H1 (cell line): ENCODE measurements at regions of chr19 and their contacts with region 1.

Region 1: GRCh38 chr19:12716861-12717260 is 6.9 kb downstream of the TNPO2 start:
- DNase-seq: no peak
- H3K4me3 ChIP-seq: no peak overlapping the region
- H3K27ac ChIP-seq: no peak overlapping the region
- H3K4me1 ChIP-seq: peaks cover 0 to 6% (median 2%) of the 10 kb centered on the region in 4 experiments; a peak in 4 of 7 replicates
- H3K27me3 ChIP-seq: no peaks in the 10 kb centered on the region
- CTCF ChIP-seq: peak; percentile 19 to 65 (median 41); a peak in 3 of 4 replicates
- EP300 ChIP-seq: no peak
- POLR2A ChIP-seq: no peak
- RAD21 ChIP-seq: peak; percentile 60 to 68

Region 2: GRCh38 chr19:12603714-12604113 is 113.1 kb before region 1 on chr19:
- CTCF ChIA-PET with region 1: no interaction called
- POLR2A ChIA-PET with region 1: no interaction called
- DNase-seq: no peak
- H3K4me3 ChIP-seq: no peak overlapping the region
- H3K27ac ChIP-seq: no peak overlapping the region
- H3K4me1 ChIP-seq: no peaks in the 10 kb centered on the region
- H3K27me3 ChIP-seq: no peaks in the 10 kb centered on the region
- CTCF ChIP-seq: no peak
- EP300 ChIP-seq: no peak
- POLR2A ChIP-seq: no peak
- RAD21 ChIP-seq: no peak

Region 3: DNA sequence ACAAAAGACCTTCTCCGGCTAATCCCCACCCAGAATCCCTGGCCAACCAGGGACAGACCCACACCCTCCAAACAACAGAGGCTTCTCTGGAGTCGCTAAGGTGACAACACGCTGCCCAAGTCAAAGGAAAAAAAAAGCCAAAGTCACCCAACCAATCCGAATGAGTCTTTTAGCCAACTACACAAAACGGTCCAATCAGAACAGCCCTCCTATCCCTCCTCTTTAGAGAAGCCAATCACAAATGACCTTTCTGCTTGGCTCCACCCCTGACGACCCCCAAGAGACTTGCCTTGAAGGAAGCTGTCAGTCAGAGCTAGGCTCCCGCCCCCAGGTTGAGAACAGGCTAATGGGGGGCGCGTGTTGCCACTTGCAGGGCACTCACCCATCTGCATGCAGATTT is 13.8 kb before region 1 on chr19:
- CTCF ChIA-PET with region 1: interaction called, 6 read pairs
- POLR2A ChIA-PET with region 1: interaction called, 50 read pairs
- DNase-seq: peak; percentile 82 to 89
- H3K4me3 ChIP-seq: no peak overlapping the region
- H3K27ac ChIP-seq: peak overlapping the region; percentile 71; the same call in 1 of the 2 replicates
- H3K4me1 ChIP-seq: peaks cover 0 to 5% (median 2%) of the 10 kb centered on the region in 4 experiments; a peak in 2 of 7 replicates
- H3K27me3 ChIP-seq: no peaks in the 10 kb centered on the region
- CTCF ChIP-seq: no peak
- EP300 ChIP-seq: no peak
- POLR2A ChIP-seq: no peak
- RAD21 ChIP-seq: no peak

Region 4: DNA sequence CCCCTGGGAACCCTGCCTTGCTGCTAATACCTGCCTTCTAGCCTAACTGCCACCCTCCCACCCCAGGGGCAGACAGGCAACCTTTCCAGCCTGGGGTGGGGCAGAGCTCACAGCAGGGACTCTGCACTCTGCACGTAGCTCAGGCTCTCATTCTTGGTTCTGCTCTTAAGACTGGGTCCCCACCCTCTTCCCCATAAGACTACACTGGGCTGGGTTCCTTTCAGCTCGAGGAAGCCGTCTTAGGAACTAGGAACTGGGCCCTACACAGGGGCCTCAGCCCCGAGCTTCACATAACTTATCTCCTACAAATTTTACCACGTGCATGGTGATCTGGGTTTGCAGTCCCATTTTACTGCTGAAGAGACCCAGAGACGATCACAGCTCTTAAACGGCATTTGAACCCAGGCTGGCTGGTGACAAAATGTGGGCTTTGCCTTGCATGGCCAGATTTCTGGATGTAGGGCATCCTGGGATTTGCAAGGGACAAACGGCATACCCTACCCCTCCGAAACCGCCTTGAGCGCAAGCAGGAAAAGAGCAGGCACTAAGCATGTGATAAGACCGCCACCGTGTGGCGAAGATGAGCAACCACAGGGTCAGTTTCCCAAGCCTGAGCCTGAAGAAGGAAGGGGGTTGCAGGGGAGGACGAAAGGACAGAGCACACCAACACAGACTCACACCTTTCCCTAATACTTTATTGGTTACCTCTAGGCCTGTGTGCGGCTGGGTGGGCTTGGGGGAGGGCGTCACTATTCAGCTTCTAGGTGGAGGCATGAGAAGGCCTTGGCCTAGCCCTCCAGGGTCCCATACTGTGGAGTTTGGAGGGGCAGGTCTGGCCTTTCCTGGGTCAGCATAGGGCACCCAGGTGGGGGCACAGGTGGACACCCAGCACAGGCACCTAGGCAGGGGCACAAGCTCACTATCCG is 79.5 kb after region 1 on chr19:
- CTCF ChIA-PET with region 1: interaction called, 11 read pairs
- POLR2A ChIA-PET with region 1: interaction called, 44 read pairs
- DNase-seq: peak in 1 of 2 experiments; percentile 81
- H3K4me3 ChIP-seq: no peak overlapping the region
- H3K27ac ChIP-seq: no peak overlapping the region
- H3K4me1 ChIP-seq: peaks cover 5 to 19% (median 13%) of the 10 kb centered on the region in 4 experiments
- H3K27me3 ChIP-seq: peaks cover 0 to 10% (median 8%) of the 10 kb centered on the region in 4 experiments; a peak in 3 of 7 replicates
- CTCF ChIP-seq: peak; percentile 92 to 99 (median 98)
- EP300 ChIP-seq: no peak
- POLR2A ChIP-seq: no peak; a peak in 1 of 3 replicates
- RAD21 ChIP-seq: peak; percentile 100

Region 5: DNA sequence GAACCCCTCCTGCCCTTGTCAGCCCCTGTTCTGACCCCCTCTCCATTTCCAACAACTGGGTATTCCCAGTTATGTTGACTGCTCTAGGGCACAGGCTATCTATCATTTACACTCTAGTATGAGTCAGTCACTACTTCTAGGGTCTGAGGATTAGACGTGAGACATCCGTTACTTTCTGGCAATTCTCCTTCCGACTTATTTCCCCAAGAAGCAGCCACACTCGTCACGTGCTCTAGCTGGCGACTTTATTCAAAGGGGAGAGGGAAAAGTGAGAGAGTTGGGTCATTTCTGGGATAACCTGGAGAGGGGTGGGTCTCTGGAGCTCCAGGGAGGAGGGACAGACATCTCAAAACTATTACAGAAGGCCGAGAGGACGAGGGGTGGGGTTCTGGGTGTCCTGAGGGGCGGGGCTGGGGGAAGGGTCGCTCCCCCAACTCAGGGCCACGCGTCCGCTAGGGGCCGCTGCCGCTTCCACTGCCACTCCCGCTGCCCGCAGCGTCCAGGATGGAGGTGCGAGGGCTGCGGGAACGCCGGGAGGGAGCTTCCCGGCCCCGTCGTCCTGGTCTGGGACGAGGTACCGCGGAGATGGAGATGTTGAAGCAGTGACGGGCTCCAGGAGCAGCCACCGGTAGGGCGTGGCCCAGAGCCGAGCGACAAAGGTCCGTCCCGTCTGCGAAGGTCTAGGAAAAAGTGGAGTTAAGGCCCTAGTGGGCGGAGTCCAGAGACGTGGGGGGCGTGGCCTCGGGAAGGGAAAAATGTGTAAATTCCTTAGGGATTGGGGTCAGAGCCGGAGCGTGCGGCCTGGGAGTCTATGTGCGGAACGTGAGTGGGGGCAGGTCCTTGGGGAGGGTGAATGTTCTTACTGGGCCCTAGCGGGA is 108.6 kb after region 1 on chr19:
- CTCF ChIA-PET with region 1: no interaction called
- POLR2A ChIA-PET with region 1: no interaction called
- DNase-seq: peak in 1 of 2 experiments; percentile 98
- H3K4me3 ChIP-seq: peak overlapping the region; percentile 42 to 64 (median 55)
- H3K27ac ChIP-seq: peak overlapping the region; percentile 26; the same call in 1 of the 2 replicates
- H3K4me1 ChIP-seq: peaks cover 0 to 8% (median 4%) of the 10 kb centered on the region in 4 experiments; a peak in 4 of 7 replicates
- H3K27me3 ChIP-seq: no peaks in the 10 kb centered on the region
- CTCF ChIP-seq: peak; percentile 76 to 81 (median 77)
- EP300 ChIP-seq: no peak
- POLR2A ChIP-seq: peak in 1 of 2 experiments; percentile 65; a peak in 1 of 3 replicates
- RAD21 ChIP-seq: peak; percentile 25 to 46; a peak in 2 of 4 replicates